Naive thymus-derived CD4-positive, alpha-beta T cell (primary cell): ENCODE measurements at regions of chr22 and their contacts with region 1.

Region 1: DNA sequence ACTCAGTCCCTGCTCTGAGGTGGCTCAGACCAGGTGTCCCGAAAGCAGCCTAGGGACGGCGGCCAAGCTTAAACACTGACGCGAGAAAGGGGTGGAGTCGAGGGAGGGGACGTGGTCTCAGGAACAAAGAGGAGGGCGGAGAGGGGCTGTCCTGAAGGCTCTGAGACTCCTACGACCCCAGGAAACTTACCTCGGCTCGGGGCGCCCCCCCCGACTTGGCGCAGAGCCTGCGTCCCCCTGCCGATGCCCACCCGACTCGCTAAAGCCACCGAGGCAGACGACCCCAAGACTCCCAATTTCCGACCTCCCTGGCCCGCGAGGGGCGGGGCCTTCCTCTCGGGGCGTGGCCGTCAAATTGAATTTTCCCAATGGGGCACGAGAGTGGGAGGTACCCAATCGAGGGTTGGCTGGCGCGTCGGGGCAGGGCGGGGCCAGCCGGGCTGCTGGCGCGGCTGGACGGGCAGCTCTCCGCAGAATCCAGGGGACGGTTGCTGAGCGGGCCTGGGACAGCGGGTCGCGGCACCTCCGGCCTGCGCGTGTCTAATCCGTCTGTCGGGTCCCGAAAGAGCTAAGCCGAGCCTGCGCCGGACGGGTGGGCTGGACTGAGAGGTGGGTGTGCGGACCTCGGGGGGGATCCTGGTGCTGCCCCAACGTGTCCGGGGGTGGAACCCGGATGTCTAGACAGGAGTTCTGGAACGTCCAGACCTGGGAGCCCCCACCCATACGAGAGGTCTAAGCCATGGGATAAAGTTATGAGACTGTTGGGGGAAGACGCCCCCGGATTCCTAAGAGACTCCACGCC is at the start of gene SMTN:
- DNase-seq: peak; percentile 75 to 90 (median 84)
- ATAC-seq: peak; percentile 83
- H3K4me3 ChIP-seq: peak within 1 kb of the TSS; percentile 84
- H3K4me3 Mint-ChIP-seq: peak within 1 kb of the TSS; percentile 83 to 93 (median 88)
- H3K27ac ChIP-seq: peak within 1 kb of the TSS; percentile 43
- H3K27ac Mint-ChIP-seq: peak within 1 kb of the TSS in 8 of 9 donors; percentile 35 to 78 (median 68)
- H3K4me1 ChIP-seq: peaks cover 13 to 39% of the 10 kb centered on the region in 2 donors
- H3K4me1 Mint-ChIP-seq: peaks cover 26 to 43% (median 38%) of the 10 kb centered on the region in 7 donors
- H3K27me3 ChIP-seq: no peaks in the 10 kb centered on the region
- H3K27me3 Mint-ChIP-seq: no peaks in the 10 kb centered on the region
- total RNA-seq, gene SMTN: 3.1 to 14.9 (median 6.2) TPM

Region 2: GRCh38 chr22:30615543-30615954 is 465.5 kb before region 1 on chr22:
- CTCF ChIA-PET with region 1: no interaction called
- POLR2A ChIA-PET with region 1: no interaction called
- intact Hi-C with region 1: no loop called
- DNase-seq: no peak
- ATAC-seq: peak; percentile 68
- H3K4me3 ChIP-seq: no peak overlapping the region
- H3K4me3 Mint-ChIP-seq: no peak overlapping the region
- H3K27ac ChIP-seq: no peak overlapping the region
- H3K27ac Mint-ChIP-seq: no peak overlapping the region
- H3K4me1 ChIP-seq: no peaks in the 10 kb centered on the region
- H3K4me1 Mint-ChIP-seq: peaks cover 0 to 5% (median 0%) of the 10 kb centered on the region in 7 donors
- H3K27me3 ChIP-seq: no peaks in the 10 kb centered on the region
- H3K27me3 Mint-ChIP-seq: no peaks in the 10 kb centered on the region

Region 3: DNA sequence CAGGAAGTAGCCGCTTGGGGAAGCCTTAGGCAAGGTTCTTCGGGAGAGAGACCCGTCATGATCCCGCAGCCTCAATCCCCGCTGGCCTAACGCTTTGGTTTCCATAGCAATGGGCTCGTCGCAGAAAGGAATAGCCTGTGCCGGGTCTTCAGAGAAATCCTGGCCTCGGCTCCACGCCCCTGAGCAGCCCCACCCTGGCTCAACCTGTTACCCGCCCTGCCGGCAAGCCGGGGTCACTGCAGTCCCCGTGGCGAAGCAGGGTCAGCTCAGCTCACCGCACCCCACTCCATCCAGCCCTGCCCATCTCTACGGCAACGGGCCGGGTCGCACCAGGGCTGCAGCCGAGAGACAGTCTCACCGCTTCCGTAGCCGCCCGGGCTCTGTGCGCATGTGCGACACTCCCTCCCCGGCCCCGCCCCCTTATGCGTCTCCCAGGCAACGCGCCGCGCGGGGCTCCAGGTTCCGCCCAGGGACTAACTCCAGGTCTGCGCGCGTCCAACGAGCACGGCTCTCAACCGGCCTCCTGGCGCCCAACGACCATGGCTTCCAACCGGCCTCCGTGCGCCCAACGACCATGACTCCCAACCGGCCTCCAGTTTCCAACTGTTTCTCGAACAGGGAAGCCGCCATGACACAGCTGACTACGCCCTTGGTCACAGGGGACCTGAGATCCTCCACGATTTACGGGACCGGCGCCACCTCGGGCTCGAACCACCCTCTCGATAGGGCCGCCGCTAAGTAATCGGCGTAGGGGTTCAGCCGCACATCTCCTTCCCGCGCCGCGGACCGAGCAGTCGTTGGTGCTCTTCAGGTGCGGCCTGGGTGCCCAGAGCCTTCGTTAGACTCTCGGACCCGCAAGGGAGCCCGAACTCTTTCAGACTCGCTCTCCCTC is 413.3 kb before region 1 on chr22 and contains the start of gene DUSP18:
- CTCF ChIA-PET with region 1: no interaction called
- POLR2A ChIA-PET with region 1: no interaction called
- intact Hi-C with region 1: loop called in 1 of 2 experiments (anchors 1 kb)
- DNase-seq: peak; percentile 87 to 95 (median 92)
- ATAC-seq: peak; percentile 96
- H3K4me3 ChIP-seq: peak within 1 kb of the TSS; percentile 98
- H3K4me3 Mint-ChIP-seq: peak within 1 kb of the TSS; percentile 90 to 98 (median 95)
- H3K27ac ChIP-seq: peak within 1 kb of the TSS; percentile 71
- H3K27ac Mint-ChIP-seq: peak within 1 kb of the TSS; percentile 74 to 97 (median 91)
- H3K4me1 ChIP-seq: peaks cover 4 to 6% of the 10 kb centered on the region in 2 donors
- H3K4me1 Mint-ChIP-seq: peaks cover 17 to 30% (median 24%) of the 10 kb centered on the region in 7 donors
- H3K27me3 ChIP-seq: no peaks in the 10 kb centered on the region
- H3K27me3 Mint-ChIP-seq: peaks cover 0 to 4% (median 0%) of the 10 kb centered on the region in 5 donors
- total RNA-seq, gene DUSP18: 7.4 to 18.5 (median 14.1) TPM

Region 4: DNA sequence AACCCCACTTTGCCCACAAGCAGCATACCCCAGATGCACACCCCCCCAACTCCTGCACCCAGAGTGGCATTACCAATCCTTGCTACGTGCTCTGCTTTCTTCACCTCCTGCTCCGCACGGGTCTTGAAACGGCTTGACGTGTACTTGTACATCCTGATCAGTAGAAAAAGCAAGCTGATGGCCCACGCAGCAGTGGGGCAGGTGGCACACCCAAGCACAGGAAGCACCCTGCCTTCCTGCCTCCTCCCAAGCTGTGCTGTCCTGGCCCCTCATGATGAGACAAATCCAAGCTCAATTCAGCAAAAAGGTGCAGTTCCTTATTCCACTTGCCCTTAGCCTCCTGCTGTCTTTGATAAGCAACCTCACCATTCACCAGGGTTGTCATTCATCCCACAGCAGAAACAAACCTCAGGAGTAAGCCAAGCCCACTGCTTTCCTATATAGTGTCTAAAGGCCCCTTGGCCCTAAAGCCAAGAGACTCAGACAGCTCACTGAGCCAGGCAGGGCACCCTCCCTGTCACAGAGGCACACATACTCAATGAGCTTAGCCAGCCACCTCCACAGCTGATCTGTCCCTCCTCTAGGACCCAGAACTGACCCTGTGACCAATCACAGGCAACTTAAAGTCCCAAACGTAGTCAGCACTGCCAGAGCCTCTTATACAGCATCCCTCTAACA is 140.2 kb before region 1 on chr22:
- CTCF ChIA-PET with region 1: interaction called, 59 read pairs
- POLR2A ChIA-PET with region 1: interaction called, 21 read pairs
- intact Hi-C with region 1: loop called (anchors 1 to 2 kb)
- DNase-seq: peak in 7 of 9 donors; percentile 52 to 72 (median 64)
- ATAC-seq: peak; percentile 74
- H3K4me3 ChIP-seq: peak overlapping the region; percentile 67
- H3K4me3 Mint-ChIP-seq: peak overlapping the region; percentile 81 to 95 (median 88)
- H3K27ac ChIP-seq: peak overlapping the region; percentile 78
- H3K27ac Mint-ChIP-seq: peak overlapping the region; percentile 85 to 97 (median 94)
- H3K4me1 ChIP-seq: peaks cover 43 to 93% of the 10 kb centered on the region in 2 donors
- H3K4me1 Mint-ChIP-seq: peaks cover 53 to 97% (median 93%) of the 10 kb centered on the region in 7 donors
- H3K27me3 ChIP-seq: no peaks in the 10 kb centered on the region
- H3K27me3 Mint-ChIP-seq: no peaks in the 10 kb centered on the region

Region 5: GRCh38 chr22:31055635-31056159 is 25.4 kb before region 1 on chr22:
- CTCF ChIA-PET with region 1: no interaction called
- POLR2A ChIA-PET with region 1: no interaction called
- intact Hi-C with region 1: no loop called
- DNase-seq: no peak
- ATAC-seq: no peak
- H3K4me3 ChIP-seq: no peak overlapping the region
- H3K4me3 Mint-ChIP-seq: no peak overlapping the region
- H3K27ac ChIP-seq: no peak overlapping the region
- H3K27ac Mint-ChIP-seq: no peak overlapping the region
- H3K4me1 ChIP-seq: no peaks in the 10 kb centered on the region
- H3K4me1 Mint-ChIP-seq: no peaks in the 10 kb centered on the region
- H3K27me3 ChIP-seq: no peaks in the 10 kb centered on the region
- H3K27me3 Mint-ChIP-seq: no peaks in the 10 kb centered on the region

Region 6: DNA sequence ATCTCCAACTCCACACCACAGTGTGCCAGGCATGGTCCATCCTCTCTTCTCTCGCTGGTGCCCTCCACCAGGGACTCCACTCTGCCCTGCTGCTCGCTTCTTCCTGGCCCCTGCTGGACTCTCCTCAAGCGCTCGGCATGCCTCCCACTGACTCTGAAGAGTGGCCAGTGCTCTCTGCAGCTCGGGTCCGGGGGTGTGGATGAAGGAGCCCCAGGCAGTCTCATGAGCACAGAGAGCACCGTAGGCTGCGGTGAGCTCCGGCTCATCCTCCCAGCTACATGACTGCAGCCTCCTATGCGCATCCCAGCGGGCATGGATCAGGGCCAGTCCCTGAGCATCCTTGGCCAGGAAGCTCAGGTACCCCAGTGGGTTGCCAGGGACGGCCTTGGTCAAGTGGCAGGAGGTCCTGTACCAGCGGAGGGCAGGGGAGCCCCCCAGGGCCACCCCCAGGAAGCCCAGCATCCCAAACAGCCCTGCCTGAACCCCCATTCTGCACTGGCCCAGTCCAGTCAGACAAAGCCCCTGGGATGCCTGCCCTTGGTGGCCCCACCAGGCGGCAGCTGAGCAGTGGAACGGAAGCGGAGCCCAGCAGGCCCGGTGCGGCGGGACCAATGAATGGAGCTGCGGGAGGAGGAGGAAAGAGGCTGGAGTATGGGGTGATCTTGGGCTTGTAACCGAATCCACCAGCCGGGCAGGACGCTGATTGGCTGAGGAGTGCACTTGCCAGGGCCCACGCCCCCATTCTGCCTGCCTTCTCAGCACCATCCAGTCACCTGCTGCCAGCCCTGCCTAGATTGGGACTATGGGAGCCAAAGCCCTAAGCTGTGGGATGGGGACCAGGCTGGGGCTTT is 59.0 kb after region 1 on chr22 and contains the start of gene PLA2G3:
- CTCF ChIA-PET with region 1: no interaction called
- POLR2A ChIA-PET with region 1: no interaction called
- intact Hi-C with region 1: no loop called
- DNase-seq: no peak
- ATAC-seq: no peak
- H3K4me3 ChIP-seq: no peak within 1 kb of the TSS
- H3K4me3 Mint-ChIP-seq: no peak within 1 kb of the TSS
- H3K27ac ChIP-seq: no peak within 1 kb of the TSS
- H3K27ac Mint-ChIP-seq: no peak within 1 kb of the TSS
- H3K4me1 ChIP-seq: no peaks in the 10 kb centered on the region
- H3K4me1 Mint-ChIP-seq: peaks cover 0 to 11% (median 0%) of the 10 kb centered on the region in 7 donors
- H3K27me3 ChIP-seq: no peaks in the 10 kb centered on the region
- H3K27me3 Mint-ChIP-seq: peaks cover 0 to 5% (median 0%) of the 10 kb centered on the region in 5 donors
- total RNA-seq, gene PLA2G3: not detected

Region 7: GRCh38 chr22:31160328-31160978 is 79.4 kb after region 1 on chr22:
- CTCF ChIA-PET with region 1: no interaction called
- POLR2A ChIA-PET with region 1: interaction called, 3 read pairs
- intact Hi-C with region 1: loop called in 1 of 2 experiments (anchors 2 kb)
- DNase-seq: peak in 3 of 9 donors; percentile 5 to 26 (median 9)
- ATAC-seq: peak; percentile 47
- H3K4me3 ChIP-seq: peak overlapping the region; percentile 76
- H3K4me3 Mint-ChIP-seq: peak overlapping the region; percentile 87 to 100 (median 99)
- H3K27ac ChIP-seq: peak overlapping the region; percentile 74
- H3K27ac Mint-ChIP-seq: peak overlapping the region; percentile 91 to 100 (median 97)
- H3K4me1 ChIP-seq: peaks cover 12 to 17% of the 10 kb centered on the region in 2 donors
- H3K4me1 Mint-ChIP-seq: peaks cover 25 to 42% (median 35%) of the 10 kb centered on the region in 7 donors
- H3K27me3 ChIP-seq: no peaks in the 10 kb centered on the region
- H3K27me3 Mint-ChIP-seq: peaks cover 0 to 13% (median 0%) of the 10 kb centered on the region in 5 donors

Region 8: GRCh38 chr22:31179356-31179755 is 98.3 kb after region 1 on chr22:
- CTCF ChIA-PET with region 1: no interaction called
- POLR2A ChIA-PET with region 1: no interaction called
- intact Hi-C with region 1: no loop called
- DNase-seq: no peak
- ATAC-seq: no peak
- H3K4me3 ChIP-seq: no peak overlapping the region
- H3K4me3 Mint-ChIP-seq: no peak overlapping the region
- H3K27ac ChIP-seq: no peak overlapping the region
- H3K27ac Mint-ChIP-seq: peak overlapping the region in 1 of 9 donors; percentile 59
- H3K4me1 ChIP-seq: no peaks in the 10 kb centered on the region
- H3K4me1 Mint-ChIP-seq: peaks cover 5 to 26% (median 17%) of the 10 kb centered on the region in 7 donors
- H3K27me3 ChIP-seq: no peaks in the 10 kb centered on the region
- H3K27me3 Mint-ChIP-seq: no peaks in the 10 kb centered on the region

Region 9: GRCh38 chr22:31272522-31273446 is 191.7 kb after region 1 on chr22:
- CTCF ChIA-PET with region 1: no interaction called
- POLR2A ChIA-PET with region 1: no interaction called
- intact Hi-C with region 1: loop called in 1 of 2 experiments (anchors 5 kb)
- DNase-seq: peak in 5 of 9 donors; percentile 38 to 58 (median 50)
- ATAC-seq: peak; percentile 81
- H3K4me3 ChIP-seq: no peak overlapping the region
- H3K4me3 Mint-ChIP-seq: peak overlapping the region in 4 of 10 donors; percentile 18 to 50 (median 28)
- H3K27ac ChIP-seq: peak overlapping the region; percentile 51
- H3K27ac Mint-ChIP-seq: peak overlapping the region; percentile 46 to 95 (median 86)
- H3K4me1 ChIP-seq: peaks cover 2 to 63% of the 10 kb centered on the region in 2 donors
- H3K4me1 Mint-ChIP-seq: peaks cover 25 to 91% (median 77%) of the 10 kb centered on the region in 7 donors
- H3K27me3 ChIP-seq: no peaks in the 10 kb centered on the region
- H3K27me3 Mint-ChIP-seq: no peaks in the 10 kb centered on the region